ENCODE measurements at regions of chr20 and their contacts with region 1.

Region 1: GRCh38 chr20:25437153-25437581 is 29.7 kb downstream of the GINS1 start:
- DNase-seq: peak in 1 of 2 experiments; percentile 17
- H3K4me3 ChIP-seq: no peak overlapping the region
- H3K27ac ChIP-seq: no peak overlapping the region
- H3K4me1 ChIP-seq: no peaks in the 10 kb centered on the region
- H3K27me3 ChIP-seq: no peaks in the 10 kb centered on the region
- CTCF ChIP-seq: no peak

Region 2: DNA sequence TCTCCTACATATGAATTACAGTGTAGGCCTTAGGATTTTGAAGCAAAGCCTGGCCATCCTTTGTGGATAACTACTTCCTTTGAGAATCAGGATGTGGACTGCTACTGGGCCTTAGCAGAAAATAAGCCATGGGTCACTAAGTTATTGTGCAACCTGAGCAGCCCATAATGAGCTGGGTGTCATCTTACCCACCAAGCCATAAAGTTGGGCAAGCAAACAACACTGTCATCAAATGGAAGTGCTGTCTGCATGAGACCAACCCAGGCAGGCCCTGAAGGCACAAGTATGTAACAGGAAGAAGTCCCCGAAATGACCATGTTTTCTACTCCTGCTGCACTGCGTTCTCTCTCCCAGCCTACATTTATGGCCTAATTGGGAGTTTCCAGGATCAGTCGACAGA is 1243.0 kb before region 1 on chr20:
- CTCF ChIA-PET with region 1: no interaction called
- POLR2A ChIA-PET with region 1: no interaction called
- intact Hi-C with region 1: no loop called
- DNase-seq: peak; percentile 11 to 75
- H3K4me3 ChIP-seq: no peak overlapping the region
- H3K27ac ChIP-seq: no peak overlapping the region
- H3K4me1 ChIP-seq: peaks cover 13% of the 10 kb centered on the region
- H3K27me3 ChIP-seq: no peaks in the 10 kb centered on the region
- CTCF ChIP-seq: no peak

Region 3: DNA sequence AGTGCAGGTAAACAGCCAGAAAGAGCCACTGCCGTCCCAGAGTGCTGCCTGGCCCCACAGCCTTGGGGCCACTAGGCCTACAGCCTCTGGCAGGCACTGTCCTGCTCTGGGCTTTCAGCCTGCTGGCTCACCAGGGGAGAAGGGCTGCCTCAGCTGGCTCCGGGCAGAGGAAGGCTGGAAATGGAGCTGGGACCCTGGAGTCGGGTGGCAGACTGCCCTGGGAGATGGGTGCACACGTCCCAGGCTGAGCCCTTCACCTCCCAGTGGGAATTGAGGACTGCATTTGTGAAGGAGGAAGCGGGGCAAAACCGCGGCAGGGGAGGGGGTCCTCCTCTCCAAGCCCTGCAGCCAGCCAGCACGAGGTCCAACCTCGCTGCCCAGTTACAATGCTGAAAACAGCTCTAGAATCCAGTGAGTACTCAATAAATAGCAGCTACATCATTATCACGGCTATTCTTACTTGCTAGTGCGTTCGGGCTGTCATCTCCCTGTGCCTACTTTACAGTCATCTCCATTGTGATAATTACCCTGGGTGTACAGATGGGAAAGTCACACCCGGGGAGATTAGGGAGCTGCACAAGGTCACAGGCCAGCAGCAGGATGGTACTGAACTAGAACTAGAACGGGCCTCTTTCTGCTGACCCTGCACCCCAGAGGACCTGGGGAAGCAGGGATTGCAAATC is 392.4 kb before region 1 on chr20:
- CTCF ChIA-PET with region 1: no interaction called
- POLR2A ChIA-PET with region 1: interaction called, 13 read pairs
- intact Hi-C with region 1: no loop called
- DNase-seq: no peak
- H3K4me3 ChIP-seq: no peak overlapping the region
- H3K27ac ChIP-seq: no peak overlapping the region
- H3K4me1 ChIP-seq: peaks cover 14% of the 10 kb centered on the region; the same call in 1 of the 2 replicates
- H3K27me3 ChIP-seq: no peaks in the 10 kb centered on the region
- CTCF ChIP-seq: no peak

Region 4: DNA sequence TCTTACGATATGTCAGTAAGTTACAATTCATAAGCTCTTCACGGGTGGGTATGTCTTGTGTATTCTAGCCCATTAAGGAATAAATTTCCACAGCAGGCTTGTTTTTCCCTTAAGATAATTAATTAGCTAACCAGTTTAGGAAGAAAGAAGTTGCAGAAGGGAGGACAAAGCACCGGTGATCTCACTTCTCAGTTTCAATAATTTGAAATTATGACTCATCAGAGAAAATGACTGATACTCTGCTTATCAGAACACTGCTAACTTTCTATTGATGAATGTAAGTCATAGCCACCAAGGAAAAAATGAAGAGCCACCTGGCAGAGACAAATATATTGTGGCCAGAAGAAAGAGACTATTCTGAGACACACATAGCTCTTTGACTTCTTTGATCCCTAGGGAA is 276.7 kb before region 1 on chr20:
- CTCF ChIA-PET with region 1: no interaction called
- POLR2A ChIA-PET with region 1: no interaction called
- intact Hi-C with region 1: no loop called
- DNase-seq: no peak
- H3K4me3 ChIP-seq: no peak overlapping the region
- H3K27ac ChIP-seq: no peak overlapping the region
- H3K4me1 ChIP-seq: no peaks in the 10 kb centered on the region
- H3K27me3 ChIP-seq: no peaks in the 10 kb centered on the region
- CTCF ChIP-seq: no peak

Region 5: DNA sequence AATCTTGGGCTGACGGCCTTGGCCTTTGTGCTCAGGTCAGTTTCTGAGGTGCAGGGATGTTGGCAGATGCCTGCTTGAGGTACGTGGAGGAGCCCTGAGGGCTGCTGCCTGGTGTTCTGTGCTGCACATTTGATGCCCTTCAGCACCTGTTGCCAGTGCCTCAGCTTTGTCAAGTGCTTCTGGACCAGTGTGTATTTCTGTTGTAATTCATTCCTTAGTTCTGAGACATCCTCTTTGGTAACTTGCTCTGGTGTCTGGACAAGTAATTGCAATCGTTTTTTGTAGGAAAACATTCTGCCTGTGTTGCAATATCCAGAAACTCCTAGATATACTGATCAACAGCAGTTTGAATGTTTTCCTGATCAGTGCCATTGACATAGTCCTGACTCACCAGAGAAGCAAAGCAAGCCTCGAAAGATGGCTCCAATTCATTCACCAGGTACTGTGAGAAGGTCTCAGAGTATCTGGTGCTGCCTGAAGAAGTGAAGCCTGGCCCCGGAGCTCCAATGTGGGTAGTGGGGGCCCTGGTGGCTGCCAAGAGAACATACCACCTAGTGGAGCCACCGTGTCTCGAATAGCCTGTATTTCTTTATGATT is 232.8 kb after region 1 on chr20:
- CTCF ChIA-PET with region 1: interaction called, 14 read pairs
- POLR2A ChIA-PET with region 1: no interaction called
- intact Hi-C with region 1: no loop called
- DNase-seq: peak in 1 of 2 experiments; percentile 90
- H3K4me3 ChIP-seq: no peak overlapping the region
- H3K27ac ChIP-seq: peak overlapping the region; percentile 38
- H3K4me1 ChIP-seq: peaks cover 6% of the 10 kb centered on the region; the same call in 1 of the 2 replicates
- H3K27me3 ChIP-seq: no peaks in the 10 kb centered on the region
- CTCF ChIP-seq: peak; percentile 28; the same call in 1 of the 2 replicates

Region 6: DNA sequence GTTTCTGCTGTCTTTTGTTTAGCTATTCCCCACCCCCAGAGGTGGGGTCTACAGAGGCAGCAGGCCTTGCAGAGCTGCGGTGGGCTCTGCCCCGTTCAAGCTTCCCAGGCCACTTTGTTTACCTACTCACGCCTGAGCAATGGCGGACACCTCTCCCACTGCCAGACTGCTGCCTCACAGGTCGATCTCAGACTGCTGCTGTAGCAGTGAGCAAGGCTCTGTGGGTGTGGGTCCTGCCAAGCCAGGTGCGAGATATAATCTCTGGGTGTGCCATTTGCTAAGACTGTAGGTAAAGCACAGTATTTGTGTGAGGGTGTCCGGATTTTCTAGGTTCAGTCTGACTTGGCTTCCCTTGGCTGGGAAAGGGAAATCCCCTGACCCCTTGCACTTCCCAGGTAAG is 283.1 kb after region 1 on chr20:
- CTCF ChIA-PET with region 1: no interaction called
- POLR2A ChIA-PET with region 1: no interaction called
- intact Hi-C with region 1: no loop called
- DNase-seq: no peak
- H3K4me3 ChIP-seq: no peak overlapping the region
- H3K27ac ChIP-seq: no peak overlapping the region
- H3K4me1 ChIP-seq: no peaks in the 10 kb centered on the region
- H3K27me3 ChIP-seq: no peaks in the 10 kb centered on the region
- CTCF ChIP-seq: no peak

Measured in PC-9 (cell line).